GM23248 (cell line): ENCODE measurements at regions of chr3 and their contacts with region 1.

Region 1: GRCh38 chr3:158790901-158791589 is 10.8 kb upstream of the MFSD1 start:
- DNase-seq: peak; percentile 92
- H3K4me3 ChIP-seq: peak overlapping the region; percentile 54
- H3K27ac ChIP-seq: no peak overlapping the region
- H3K4me1 ChIP-seq: peaks cover 23% of the 10 kb centered on the region
- H3K27me3 ChIP-seq: no peaks in the 10 kb centered on the region

Region 2: DNA sequence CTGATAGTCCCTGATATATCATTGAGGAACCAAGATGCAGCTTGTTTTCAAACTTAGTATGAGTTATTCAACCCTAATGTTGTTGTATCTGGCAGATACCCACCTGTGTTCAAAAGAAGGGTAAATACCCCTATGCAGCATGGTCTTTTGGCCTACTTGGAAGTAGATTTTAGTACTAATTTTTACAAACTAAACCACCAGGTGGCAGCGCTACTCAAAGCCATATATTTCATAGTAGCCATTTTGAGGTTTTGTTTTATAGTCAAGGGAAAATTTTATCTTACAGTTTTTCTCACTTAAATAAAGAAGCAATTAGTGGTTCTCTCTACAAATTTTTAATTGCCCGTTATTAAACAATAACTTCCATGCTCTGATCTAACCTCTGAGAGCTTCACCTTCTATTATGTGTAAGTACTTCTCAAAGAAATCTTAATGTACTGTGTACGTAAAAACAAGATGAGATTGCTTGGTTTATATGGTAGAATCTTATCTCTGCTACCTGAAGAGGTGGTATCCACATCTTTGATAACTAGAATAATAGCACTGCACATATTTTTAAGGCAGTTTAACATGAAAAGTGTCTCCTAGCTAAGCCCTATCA is 251.5 kb before region 1 on chr3:
- in situ Hi-C with region 1: loop called (anchors 25 kb)
- DNase-seq: peak; percentile 68
- H3K4me3 ChIP-seq: no peak overlapping the region
- H3K27ac ChIP-seq: no peak overlapping the region
- H3K4me1 ChIP-seq: no peaks in the 10 kb centered on the region
- H3K27me3 ChIP-seq: no peaks in the 10 kb centered on the region

Region 3: DNA sequence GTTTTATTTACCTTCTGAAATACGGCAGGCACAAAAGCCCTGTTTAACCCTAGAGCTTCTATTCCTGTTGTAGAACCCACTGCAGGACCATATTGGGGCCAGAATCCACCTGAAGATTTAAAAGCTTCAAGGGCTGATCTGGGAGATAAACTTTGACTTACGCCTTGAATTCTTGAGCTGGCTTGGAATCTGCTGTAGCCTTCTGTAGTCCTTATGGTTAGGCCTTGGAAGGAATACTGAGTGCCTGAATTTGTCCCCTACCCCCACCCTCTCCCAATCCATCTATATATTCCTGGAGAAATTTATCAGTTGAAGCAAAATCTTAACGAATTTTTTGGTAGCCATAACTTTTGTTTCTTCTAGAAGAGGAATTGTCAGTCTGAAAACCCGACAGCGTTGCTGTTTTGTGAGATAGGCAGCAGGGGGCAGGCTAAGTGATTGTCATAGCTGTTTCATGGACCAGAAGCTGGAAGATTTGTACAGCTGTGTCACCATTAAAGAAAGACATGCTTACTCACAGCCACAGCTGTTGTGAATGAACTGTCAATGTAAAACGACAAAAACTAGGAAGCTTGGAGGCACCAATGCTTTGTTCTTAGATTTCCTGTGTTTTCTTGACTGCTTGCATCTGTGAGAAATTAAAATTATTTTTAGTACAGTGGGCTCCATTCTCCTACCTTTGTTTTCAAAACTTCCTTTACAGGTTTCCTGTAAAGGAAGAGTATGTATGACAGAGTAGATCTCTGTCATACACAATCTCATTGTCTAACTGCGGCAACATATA is 131.4 kb before region 1 on chr3:
- in situ Hi-C with region 1: loop called (anchors 10 kb)
- DNase-seq: peak; percentile 91
- H3K4me3 ChIP-seq: no peak overlapping the region
- H3K27ac ChIP-seq: 0 out of 2 replicates have a peak overlapping the region, but pooled peaks have one; percentile 2
- H3K4me1 ChIP-seq: 0 out of 2 replicates have a peak, but pooled peaks cover 3% of the 10 kb centered on the region
- H3K27me3 ChIP-seq: no peaks in the 10 kb centered on the region

Region 4: DNA sequence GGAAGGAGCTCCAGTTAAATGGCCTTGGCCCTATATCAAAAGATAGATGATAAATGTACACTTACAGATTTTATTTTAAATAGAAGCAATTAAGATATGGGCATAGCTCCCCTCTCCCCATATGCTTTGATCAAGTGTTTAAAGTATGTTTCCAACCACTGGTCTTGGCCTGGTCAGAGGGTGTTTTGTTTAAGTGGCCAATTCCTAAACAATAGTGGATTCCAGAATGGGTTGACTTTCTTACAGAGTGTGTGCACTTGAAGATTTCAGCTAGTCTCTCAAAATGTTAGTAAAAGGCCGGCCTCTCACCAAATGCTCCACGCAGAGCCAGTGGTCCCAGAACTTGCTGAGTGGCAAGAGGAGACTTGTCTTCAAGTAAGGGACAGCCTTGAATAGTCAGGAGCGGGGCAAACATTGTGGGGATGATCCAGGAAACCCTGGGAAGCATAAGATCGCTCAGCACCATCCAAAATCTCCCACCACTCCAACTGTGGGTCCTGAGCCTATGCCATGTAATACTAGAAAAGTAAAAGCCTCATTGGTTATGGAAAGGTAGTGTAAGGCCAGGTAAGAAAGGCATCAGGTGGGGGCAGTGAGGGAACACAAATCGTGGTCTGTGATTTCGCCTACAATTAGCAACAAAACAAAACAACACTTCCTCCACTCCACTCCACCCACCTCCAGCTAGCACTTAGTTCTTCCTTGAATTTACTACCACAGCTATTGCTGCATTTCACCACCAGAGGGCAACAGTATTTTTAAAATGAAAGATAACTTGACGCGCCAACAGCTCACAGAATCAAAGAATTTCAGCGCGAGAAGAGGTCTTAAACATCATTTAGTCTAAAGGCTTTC is 63.6 kb before region 1 on chr3:
- in situ Hi-C with region 1: loop called (anchors 5 kb)
- DNase-seq: peak; percentile 84
- H3K4me3 ChIP-seq: peak overlapping the region; percentile 58
- H3K27ac ChIP-seq: no peak overlapping the region
- H3K4me1 ChIP-seq: peaks cover 40% of the 10 kb centered on the region
- H3K27me3 ChIP-seq: no peaks in the 10 kb centered on the region